ENCODE measurements at regions of chr4 and their contacts with region 1.

Region 1: GRCh38 chr4:152500800-152501434 is 35.0 kb downstream of the FBXW7 start:
- DNase-seq: peak; percentile 76 to 82 (median 80)
- H3K4me3 ChIP-seq: no peak overlapping the region
- H3K4me3 Mint-ChIP-seq: no peak overlapping the region
- H3K27ac ChIP-seq: no peak overlapping the region
- H3K27ac Mint-ChIP-seq: peak overlapping the region in 6 of 7 donors; percentile 0 to 85 (median 58)
- H3K4me1 ChIP-seq: peaks cover 6% of the 10 kb centered on the region
- H3K4me1 Mint-ChIP-seq: peaks cover 27 to 44% (median 36%) of the 10 kb centered on the region in 4 donors
- H3K27me3 ChIP-seq: no peaks in the 10 kb centered on the region
- H3K27me3 Mint-ChIP-seq: no peaks in the 10 kb centered on the region

Region 2: DNA sequence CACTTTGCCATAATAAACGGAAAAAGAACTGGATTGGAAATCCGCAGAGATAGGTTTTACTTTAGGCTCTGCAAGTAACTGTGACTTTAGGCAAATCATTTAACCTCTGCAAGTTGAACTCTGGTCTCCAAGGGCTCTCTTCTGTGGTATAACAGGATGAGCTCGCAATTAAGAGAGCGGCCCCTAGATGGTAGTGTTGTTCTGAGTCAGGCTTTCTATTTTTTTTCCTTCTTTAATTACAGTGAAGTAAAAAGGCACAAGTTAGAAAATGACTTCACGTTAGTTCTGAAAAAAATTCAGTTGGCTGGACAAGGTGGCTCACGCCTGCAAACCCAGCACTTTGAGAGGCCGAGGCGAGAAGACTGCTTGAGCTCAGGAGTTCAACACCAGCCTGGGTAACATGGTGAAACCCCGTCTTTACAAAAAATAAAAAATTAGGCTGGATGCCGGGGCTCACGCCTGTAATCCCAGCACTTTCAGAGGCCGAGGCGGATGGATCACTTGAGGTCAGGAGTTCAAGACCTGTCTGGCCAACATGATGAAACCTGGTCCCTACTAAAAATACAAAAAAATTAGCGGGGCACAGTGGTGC is 1383.5 kb before region 1 on chr4:
- CTCF ChIA-PET with region 1: no interaction called
- POLR2A ChIA-PET with region 1: no interaction called
- intact Hi-C with region 1: loop called (anchors 1 kb)
- DNase-seq: peak; percentile 37 to 49 (median 45)
- H3K4me3 ChIP-seq: no peak overlapping the region
- H3K4me3 Mint-ChIP-seq: no peak overlapping the region
- H3K27ac ChIP-seq: no peak overlapping the region
- H3K27ac Mint-ChIP-seq: no peak overlapping the region
- H3K4me1 ChIP-seq: no peaks in the 10 kb centered on the region
- H3K4me1 Mint-ChIP-seq: peaks cover 0 to 4% (median 2%) of the 10 kb centered on the region in 4 donors
- H3K27me3 ChIP-seq: no peaks in the 10 kb centered on the region
- H3K27me3 Mint-ChIP-seq: no peaks in the 10 kb centered on the region

Region 3: GRCh38 chr4:151248519-151248918 is 1252.4 kb before region 1 on chr4:
- CTCF ChIA-PET with region 1: no interaction called
- POLR2A ChIA-PET with region 1: no interaction called
- intact Hi-C with region 1: no loop called
- DNase-seq: no peak
- H3K4me3 ChIP-seq: no peak overlapping the region
- H3K4me3 Mint-ChIP-seq: no peak overlapping the region
- H3K27ac ChIP-seq: no peak overlapping the region
- H3K27ac Mint-ChIP-seq: peak overlapping the region in 1 of 7 donors; percentile 20
- H3K4me1 ChIP-seq: no peaks in the 10 kb centered on the region
- H3K4me1 Mint-ChIP-seq: no peaks in the 10 kb centered on the region
- H3K27me3 ChIP-seq: no peaks in the 10 kb centered on the region
- H3K27me3 Mint-ChIP-seq: peaks cover 2 to 6% of the 10 kb centered on the region in 2 donors

Region 4: GRCh38 chr4:152454398-152455011 is 46.4 kb before region 1 on chr4:
- CTCF ChIA-PET with region 1: interaction called, 6 read pairs
- POLR2A ChIA-PET with region 1: no interaction called
- intact Hi-C with region 1: loop called (anchors 5 kb)
- DNase-seq: peak in 3 of 5 donors; percentile 12
- H3K4me3 ChIP-seq: no peak overlapping the region
- H3K4me3 Mint-ChIP-seq: no peak overlapping the region
- H3K27ac ChIP-seq: no peak overlapping the region
- H3K27ac Mint-ChIP-seq: peak overlapping the region in 2 of 7 donors; percentile 31 to 73
- H3K4me1 ChIP-seq: peaks cover 23% of the 10 kb centered on the region
- H3K4me1 Mint-ChIP-seq: peaks cover 28 to 42% (median 36%) of the 10 kb centered on the region in 4 donors
- H3K27me3 ChIP-seq: no peaks in the 10 kb centered on the region
- H3K27me3 Mint-ChIP-seq: no peaks in the 10 kb centered on the region

Region 5: GRCh38 chr4:152515678-152516077 is 14.8 kb after region 1 on chr4:
- CTCF ChIA-PET with region 1: interaction called, 20 read pairs
- POLR2A ChIA-PET with region 1: no interaction called
- intact Hi-C with region 1: no loop called
- DNase-seq: no peak
- H3K4me3 ChIP-seq: no peak overlapping the region
- H3K4me3 Mint-ChIP-seq: no peak overlapping the region
- H3K27ac ChIP-seq: no peak overlapping the region
- H3K27ac Mint-ChIP-seq: no peak overlapping the region
- H3K4me1 ChIP-seq: peaks cover 30% of the 10 kb centered on the region
- H3K4me1 Mint-ChIP-seq: peaks cover 39 to 66% (median 54%) of the 10 kb centered on the region in 4 donors
- H3K27me3 ChIP-seq: no peaks in the 10 kb centered on the region
- H3K27me3 Mint-ChIP-seq: no peaks in the 10 kb centered on the region

Region 6: DNA sequence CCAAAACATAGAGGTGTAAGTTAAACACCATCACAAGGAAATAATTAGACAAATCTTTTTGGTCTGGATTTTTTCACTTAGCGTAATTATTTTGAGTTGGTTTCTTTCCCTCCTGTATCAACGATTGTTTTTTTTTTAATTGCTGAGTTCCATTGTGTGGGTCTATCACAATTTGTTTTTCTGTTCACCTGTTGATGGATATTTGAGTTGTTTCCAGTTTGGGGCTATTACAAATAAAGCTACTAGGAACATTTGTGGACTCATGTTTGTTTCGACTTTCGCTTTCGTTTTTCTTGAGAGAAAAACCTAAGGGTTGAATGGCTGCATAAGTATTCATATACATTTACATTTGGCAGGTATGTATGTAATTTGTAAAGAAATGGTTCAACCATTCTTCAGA is 55.4 kb after region 1 on chr4:
- CTCF ChIA-PET with region 1: interaction called, 21 read pairs
- POLR2A ChIA-PET with region 1: interaction called, 7 read pairs
- intact Hi-C with region 1: loop called (anchors 5 kb)
- DNase-seq: peak in 2 of 5 donors; percentile 17 to 22
- H3K4me3 ChIP-seq: peak overlapping the region; percentile 9 to 22
- H3K4me3 Mint-ChIP-seq: peak overlapping the region; percentile 79 to 89 (median 86)
- H3K27ac ChIP-seq: peak overlapping the region; percentile 14
- H3K27ac Mint-ChIP-seq: peak overlapping the region; percentile 55 to 95 (median 94)
- H3K4me1 ChIP-seq: peaks cover 50% of the 10 kb centered on the region
- H3K4me1 Mint-ChIP-seq: peaks cover 29 to 57% (median 42%) of the 10 kb centered on the region in 4 donors
- H3K27me3 ChIP-seq: no peaks in the 10 kb centered on the region
- H3K27me3 Mint-ChIP-seq: no peaks in the 10 kb centered on the region

Region 7: GRCh38 chr4:152628128-152628527 is 127.2 kb after region 1 on chr4:
- CTCF ChIA-PET with region 1: interaction called, 10 read pairs
- POLR2A ChIA-PET with region 1: interaction called, 3 read pairs
- intact Hi-C with region 1: no loop called
- DNase-seq: no peak
- H3K4me3 ChIP-seq: no peak overlapping the region
- H3K4me3 Mint-ChIP-seq: no peak overlapping the region
- H3K27ac ChIP-seq: no peak overlapping the region
- H3K27ac Mint-ChIP-seq: peak overlapping the region in 2 of 7 donors; percentile 2 to 24
- H3K4me1 ChIP-seq: no peaks in the 10 kb centered on the region
- H3K4me1 Mint-ChIP-seq: peaks cover 0 to 6% (median 2%) of the 10 kb centered on the region in 4 donors
- H3K27me3 ChIP-seq: no peaks in the 10 kb centered on the region
- H3K27me3 Mint-ChIP-seq: no peaks in the 10 kb centered on the region

Region 8: DNA sequence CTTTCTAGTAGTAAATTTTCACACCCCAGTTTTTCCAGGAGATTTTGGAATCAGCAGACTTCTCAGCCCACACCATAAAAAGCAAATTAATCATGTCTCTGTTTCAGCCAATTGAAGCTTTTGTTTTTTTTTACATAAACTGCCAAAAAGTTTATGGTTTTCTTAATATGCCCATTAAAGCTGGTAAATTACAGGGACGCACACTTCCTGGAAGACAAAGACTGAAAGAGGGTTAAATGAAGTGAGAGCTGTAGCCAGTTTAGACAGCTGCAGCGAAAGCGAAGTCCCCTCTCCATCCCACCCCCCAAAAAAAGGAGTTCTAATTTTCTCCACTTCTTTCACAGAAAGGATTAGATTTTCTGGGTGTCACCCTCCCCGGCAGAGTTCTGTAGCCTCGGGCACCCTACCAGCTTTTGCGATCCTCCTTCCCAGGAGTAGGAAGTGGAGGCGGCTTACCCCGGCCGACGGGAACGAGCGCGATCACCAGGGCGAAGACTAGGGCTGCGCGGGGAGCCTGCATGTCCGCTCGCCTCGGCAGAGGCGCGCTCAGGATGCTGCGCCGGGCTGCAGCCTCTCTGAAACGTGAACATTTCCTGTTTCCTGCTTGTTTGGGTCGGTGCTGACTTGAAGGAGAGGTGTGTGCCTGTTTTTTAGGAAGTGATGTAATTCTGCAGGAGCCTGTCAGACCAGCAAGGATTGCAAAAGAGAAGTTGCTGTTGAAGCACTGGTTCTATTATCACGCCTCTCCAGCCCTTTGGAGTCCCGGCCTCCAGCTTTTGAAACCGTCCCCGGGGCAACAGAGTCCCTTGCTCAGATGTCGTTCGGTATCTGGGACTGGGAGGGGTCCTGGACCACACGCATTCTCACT is 178.7 kb after region 1 on chr4 and contains the start of gene TMEM154:
- CTCF ChIA-PET with region 1: interaction called, 17 read pairs
- POLR2A ChIA-PET with region 1: interaction called, 4 read pairs
- intact Hi-C with region 1: loop called (anchors 1 kb)
- DNase-seq: peak; percentile 78 to 82 (median 81)
- H3K4me3 ChIP-seq: peak within 1 kb of the TSS; percentile 30 to 62
- H3K4me3 Mint-ChIP-seq: peak within 1 kb of the TSS; percentile 91 to 97 (median 96)
- H3K27ac ChIP-seq: peak within 1 kb of the TSS; percentile 69
- H3K27ac Mint-ChIP-seq: peak within 1 kb of the TSS; percentile 90 to 98 (median 96)
- H3K4me1 ChIP-seq: peaks cover 47% of the 10 kb centered on the region
- H3K4me1 Mint-ChIP-seq: peaks cover 36 to 55% (median 47%) of the 10 kb centered on the region in 4 donors
- H3K27me3 ChIP-seq: no peaks in the 10 kb centered on the region
- H3K27me3 Mint-ChIP-seq: no peaks in the 10 kb centered on the region
- total RNA-seq, gene TMEM154: 35.2 to 38.6 TPM